Calu3 (cell line): ENCODE measurements at regions of chr6 and their contacts with region 1.

Region 1: GRCh38 chr6:47134476-47135189 is 92.5 kb upstream of the ADGRF1 start:
- DNase-seq: peak; percentile 52
- H3K4me3 Mint-ChIP-seq: peak overlapping the region; percentile 18
- H3K27ac Mint-ChIP-seq: peak overlapping the region; percentile 94
- H3K4me1 Mint-ChIP-seq: peaks cover 81% of the 10 kb centered on the region
- H3K27me3 Mint-ChIP-seq: no peaks in the 10 kb centered on the region
- CTCF ChIP-seq: no peak

Region 2: DNA sequence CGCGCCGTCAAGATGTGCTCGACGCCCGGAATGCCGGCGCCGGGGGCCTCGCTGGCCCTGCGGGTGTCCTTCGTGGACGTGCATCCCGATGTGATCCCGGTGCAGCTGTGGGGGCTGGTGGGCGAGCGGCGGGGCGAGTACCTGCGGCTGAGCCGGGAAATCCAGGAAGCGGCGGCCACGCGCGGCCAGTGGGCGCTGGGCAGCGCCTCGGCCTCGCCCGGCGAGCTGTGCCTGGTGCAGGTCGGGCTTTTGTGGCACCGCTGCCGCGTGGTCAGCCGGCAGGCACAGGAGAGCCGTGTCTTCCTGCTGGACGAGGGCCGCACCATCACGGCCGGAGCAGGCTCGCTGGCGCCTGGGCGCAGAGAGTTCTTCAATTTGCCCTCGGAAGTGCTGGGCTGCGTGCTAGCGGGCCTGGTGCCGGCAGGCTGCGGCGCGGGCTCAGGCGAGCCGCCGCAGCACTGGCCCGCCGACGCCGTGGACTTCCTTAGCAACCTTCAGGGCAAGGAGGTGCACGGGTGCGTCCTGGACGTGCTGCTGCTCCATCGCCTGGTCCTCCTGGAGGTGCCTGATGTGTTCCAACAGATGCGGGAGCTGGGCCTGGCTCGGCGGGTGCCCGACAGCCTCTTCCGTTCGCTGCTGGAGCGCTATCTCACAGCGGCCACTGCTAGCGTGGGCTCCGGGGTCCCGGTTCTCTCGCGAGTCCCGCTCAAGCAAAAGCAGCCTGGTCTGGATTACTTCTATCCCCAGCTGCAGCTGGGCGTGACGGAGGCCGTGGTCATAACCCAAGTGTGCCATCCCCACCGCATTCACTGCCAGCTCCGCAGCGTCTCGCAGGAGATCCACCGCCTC is 446.3 kb before region 1 on chr6:
- CTCF ChIA-PET with region 1: no interaction called
- intact Hi-C with region 1: no loop called
- DNase-seq: no peak
- H3K4me3 Mint-ChIP-seq: no peak overlapping the region
- H3K27ac Mint-ChIP-seq: no peak overlapping the region
- H3K4me1 Mint-ChIP-seq: peaks cover 9% of the 10 kb centered on the region
- H3K27me3 Mint-ChIP-seq: no peaks in the 10 kb centered on the region
- CTCF ChIP-seq: no peak

Region 3: DNA sequence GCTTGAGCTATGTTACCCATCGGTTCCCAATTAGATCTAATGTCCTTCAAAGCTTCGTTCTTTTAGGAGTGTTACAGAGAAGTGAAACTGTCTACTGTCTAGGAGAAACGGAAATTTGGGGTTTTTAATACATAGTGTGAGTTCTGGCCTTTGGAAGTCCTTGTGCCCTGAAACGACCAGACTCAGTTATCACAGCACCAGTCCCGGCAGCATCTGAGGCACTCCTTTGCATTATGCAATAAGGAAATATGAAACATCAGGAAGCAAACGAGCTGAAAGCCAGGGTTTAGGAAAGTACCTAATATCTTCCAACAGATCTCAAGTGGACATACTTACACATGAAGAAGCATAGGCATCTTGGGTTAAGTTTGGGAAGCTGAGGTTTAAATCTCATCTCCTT is 30.7 kb before region 1 on chr6:
- CTCF ChIA-PET with region 1: no interaction called
- intact Hi-C with region 1: loop called (anchors 2 kb)
- DNase-seq: peak; percentile 49
- H3K4me3 Mint-ChIP-seq: no peak overlapping the region
- H3K27ac Mint-ChIP-seq: peak overlapping the region; percentile 88
- H3K4me1 Mint-ChIP-seq: peaks cover 83% of the 10 kb centered on the region
- H3K27me3 Mint-ChIP-seq: no peaks in the 10 kb centered on the region
- CTCF ChIP-seq: no peak

Region 4: GRCh38 chr6:47440719-47441118 is 306.1 kb after region 1 on chr6:
- CTCF ChIA-PET with region 1: no interaction called
- intact Hi-C with region 1: no loop called
- DNase-seq: peak; percentile 37
- H3K4me3 Mint-ChIP-seq: no peak overlapping the region
- H3K27ac Mint-ChIP-seq: peak overlapping the region; percentile 64
- H3K4me1 Mint-ChIP-seq: peaks cover 36% of the 10 kb centered on the region
- H3K27me3 Mint-ChIP-seq: no peaks in the 10 kb centered on the region
- CTCF ChIP-seq: no peak